ENCODE measurements at regions of chr6 and their contacts with region 1.

Region 1: GRCh38 chr6:127120787-127121636 is 2.5 kb downstream of the RSPO3 start:
- DNase-seq: peak; percentile 79
- ATAC-seq: peak; percentile 78
- H3K4me3 ChIP-seq: no peak overlapping the region
- H3K27ac ChIP-seq: no peak overlapping the region
- H3K4me1 ChIP-seq: no peaks in the 10 kb centered on the region; the same call in 1 of the 2 replicates
- H3K27me3 ChIP-seq: peaks cover 42% of the 10 kb centered on the region
- CTCF ChIP-seq: peak; percentile 88
- POLR2A ChIP-seq: no peak
- RAD21 ChIP-seq: peak; percentile 95

Region 2: GRCh38 chr6:125314019-125314581 is 1806.9 kb before region 1 on chr6:
- CTCF ChIA-PET with region 1: no interaction called
- POLR2A ChIA-PET with region 1: no interaction called
- dilution Hi-C with region 1: no loop called
- in situ Hi-C with region 1: no loop called
- intact Hi-C with region 1: loop called (anchors 10 kb)
- DNase-seq: peak; percentile 61
- ATAC-seq: peak; percentile 88
- H3K4me3 ChIP-seq: no peak overlapping the region
- H3K27ac ChIP-seq: no peak overlapping the region
- H3K4me1 ChIP-seq: no peaks in the 10 kb centered on the region
- H3K27me3 ChIP-seq: peaks cover 11% of the 10 kb centered on the region
- CTCF ChIP-seq: peak; percentile 87
- POLR2A ChIP-seq: no peak
- RAD21 ChIP-seq: peak; percentile 80

Region 3: DNA sequence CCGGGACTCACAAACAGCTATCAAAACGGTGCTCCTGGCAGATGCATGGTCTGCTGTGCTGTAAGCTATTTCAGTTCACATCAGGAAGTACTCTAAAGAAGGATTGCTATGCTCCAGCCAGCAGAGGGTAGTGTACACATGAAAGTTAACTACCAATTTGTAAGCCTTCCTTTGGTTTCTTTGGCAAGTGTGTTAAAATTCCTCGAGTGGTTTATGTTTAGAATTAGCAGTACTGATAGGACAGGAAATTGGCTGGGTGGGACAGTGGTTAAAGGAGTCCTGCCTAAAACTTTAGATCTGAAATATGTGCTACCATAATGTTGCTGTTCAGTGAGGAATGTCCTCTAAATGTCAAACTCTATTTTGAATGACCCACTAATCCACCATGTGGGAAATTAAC is 1087.3 kb before region 1 on chr6:
- CTCF ChIA-PET with region 1: no interaction called
- POLR2A ChIA-PET with region 1: no interaction called
- dilution Hi-C with region 1: no loop called
- in situ Hi-C with region 1: loop called (anchors 25 kb)
- intact Hi-C with region 1: loop called (anchors 1 kb)
- DNase-seq: peak; percentile 91
- ATAC-seq: peak; percentile 96
- H3K4me3 ChIP-seq: no peak overlapping the region
- H3K27ac ChIP-seq: no peak overlapping the region
- H3K4me1 ChIP-seq: no peaks in the 10 kb centered on the region; the same call in 1 of the 2 replicates
- H3K27me3 ChIP-seq: no peaks in the 10 kb centered on the region
- CTCF ChIP-seq: peak; percentile 81
- POLR2A ChIP-seq: no peak
- RAD21 ChIP-seq: peak; percentile 80

Region 4: DNA sequence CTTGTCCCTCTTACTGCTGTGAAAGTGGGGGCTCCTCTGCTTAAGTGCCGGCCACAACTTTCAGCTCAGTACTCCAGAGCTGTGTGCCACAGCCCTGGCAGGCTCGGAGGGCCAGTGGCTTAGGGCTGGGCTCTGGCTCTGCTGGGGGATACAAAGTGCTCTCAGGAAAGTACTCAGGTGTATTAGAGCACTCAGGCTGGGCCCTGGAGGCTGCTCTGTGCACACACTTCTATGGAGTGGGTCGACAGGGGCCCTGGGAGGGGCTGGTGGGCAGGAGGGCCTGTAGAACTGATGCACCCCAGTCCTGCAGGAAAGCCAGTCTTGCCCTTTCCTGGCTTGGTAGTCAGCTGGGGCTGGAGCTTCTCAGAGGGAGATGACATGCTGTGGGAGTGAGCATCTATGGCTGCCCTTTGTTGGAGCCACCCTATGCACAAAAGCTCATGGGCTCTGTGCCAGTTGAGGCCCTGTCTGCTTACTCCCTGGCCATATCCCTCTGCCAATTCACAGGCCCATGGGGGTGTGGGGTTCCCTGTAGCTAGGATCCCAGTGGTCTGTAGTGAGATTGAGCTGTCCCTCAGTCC is 759.1 kb before region 1 on chr6:
- CTCF ChIA-PET with region 1: no interaction called
- POLR2A ChIA-PET with region 1: no interaction called
- dilution Hi-C with region 1: no loop called
- in situ Hi-C with region 1: loop called (anchors 10 kb)
- intact Hi-C with region 1: loop called (anchors 1 kb)
- DNase-seq: no peak
- ATAC-seq: no peak
- H3K4me3 ChIP-seq: no peak overlapping the region
- H3K27ac ChIP-seq: no peak overlapping the region
- H3K4me1 ChIP-seq: no peaks in the 10 kb centered on the region
- H3K27me3 ChIP-seq: no peaks in the 10 kb centered on the region
- CTCF ChIP-seq: no peak
- POLR2A ChIP-seq: no peak
- RAD21 ChIP-seq: no peak

Region 5: DNA sequence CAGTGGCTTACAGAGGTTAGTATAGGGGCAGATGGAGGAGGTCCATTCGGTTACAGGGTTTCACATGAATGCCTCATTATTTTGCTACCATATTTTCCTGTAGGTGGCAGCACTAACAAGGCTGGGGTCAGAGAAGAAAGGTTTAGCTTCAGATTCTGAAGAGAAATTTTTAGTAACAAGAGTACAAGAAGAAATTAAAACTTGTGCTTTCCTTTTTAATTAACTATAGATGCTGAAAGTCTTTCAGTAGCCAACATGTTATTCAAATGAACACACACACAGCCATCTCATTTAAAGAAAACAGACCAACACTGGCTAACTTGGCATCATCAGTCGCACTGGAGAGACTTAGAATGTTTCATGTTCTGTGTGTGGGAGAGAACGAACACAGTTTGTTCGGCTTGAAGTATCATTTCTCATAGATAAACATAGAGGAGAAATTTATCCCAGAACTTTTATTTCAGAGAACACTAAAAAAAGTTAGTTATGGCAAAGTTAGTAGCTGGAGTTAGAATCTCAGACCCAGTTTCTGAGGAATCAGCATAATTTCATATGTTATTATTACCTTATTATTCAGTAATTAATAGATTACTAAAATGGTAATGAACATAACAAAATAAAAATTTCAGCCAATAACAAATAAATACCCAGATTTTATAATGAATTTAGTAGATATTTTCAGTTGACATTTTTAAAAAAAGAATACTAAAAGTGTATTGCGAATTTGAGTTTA is 316.5 kb before region 1 on chr6:
- CTCF ChIA-PET with region 1: interaction called, 3 read pairs
- POLR2A ChIA-PET with region 1: no interaction called
- dilution Hi-C with region 1: no loop called
- in situ Hi-C with region 1: no loop called
- intact Hi-C with region 1: loop called (anchors 1 kb)
- DNase-seq: peak; percentile 55
- ATAC-seq: peak; percentile 87
- H3K4me3 ChIP-seq: no peak overlapping the region
- H3K27ac ChIP-seq: no peak overlapping the region
- H3K4me1 ChIP-seq: no peaks in the 10 kb centered on the region
- H3K27me3 ChIP-seq: no peaks in the 10 kb centered on the region
- CTCF ChIP-seq: peak; percentile 75
- POLR2A ChIP-seq: no peak
- RAD21 ChIP-seq: peak; percentile 73

Region 6: DNA sequence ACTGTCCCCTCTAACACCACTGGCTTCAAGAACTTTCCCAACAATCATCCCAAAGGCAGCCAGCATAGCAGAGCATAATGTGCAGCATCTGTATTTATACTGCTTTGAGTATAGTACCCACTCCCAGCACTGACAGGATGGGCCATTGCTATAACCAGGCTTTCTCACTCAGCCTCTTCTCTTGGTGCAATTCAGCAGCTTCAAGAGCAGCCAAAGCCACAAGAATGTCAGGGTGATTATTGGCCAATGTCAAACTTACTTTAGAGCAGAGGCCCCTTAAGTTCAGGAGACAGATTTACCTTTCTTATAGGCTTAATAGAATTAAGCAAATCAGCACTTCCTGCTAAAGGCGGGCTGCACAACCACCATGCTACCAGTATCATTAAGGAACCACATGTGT is 234.9 kb before region 1 on chr6:
- CTCF ChIA-PET with region 1: no interaction called
- POLR2A ChIA-PET with region 1: no interaction called
- dilution Hi-C with region 1: no loop called
- in situ Hi-C with region 1: no loop called
- intact Hi-C with region 1: no loop called
- DNase-seq: no peak
- ATAC-seq: no peak
- H3K4me3 ChIP-seq: no peak overlapping the region
- H3K27ac ChIP-seq: no peak overlapping the region
- H3K4me1 ChIP-seq: no peaks in the 10 kb centered on the region
- H3K27me3 ChIP-seq: no peaks in the 10 kb centered on the region
- CTCF ChIP-seq: no peak
- POLR2A ChIP-seq: no peak
- RAD21 ChIP-seq: no peak

Region 7: GRCh38 chr6:127690092-127690491 is 569.1 kb after region 1 on chr6:
- CTCF ChIA-PET with region 1: no interaction called
- POLR2A ChIA-PET with region 1: no interaction called
- dilution Hi-C with region 1: no loop called
- in situ Hi-C with region 1: no loop called
- intact Hi-C with region 1: no loop called
- DNase-seq: peak; percentile 28
- ATAC-seq: peak; percentile 57
- H3K4me3 ChIP-seq: no peak overlapping the region
- H3K27ac ChIP-seq: no peak overlapping the region
- H3K4me1 ChIP-seq: no peaks in the 10 kb centered on the region
- H3K27me3 ChIP-seq: no peaks in the 10 kb centered on the region; the same call in 1 of the 2 replicates
- CTCF ChIP-seq: peak; percentile 56
- POLR2A ChIP-seq: no peak
- RAD21 ChIP-seq: peak; percentile 51